Colonic mucosa (tissue), 4 donors: ENCODE measurements at regions of chr18 and their contacts with region 1.

Region 1: GRCh38 chr18:27017901-27018500 is 152.5 kb upstream of the AQP4 start:
- DNase-seq: no peak
- H3K4me3 ChIP-seq: no peak overlapping the region
- H3K27ac ChIP-seq: no peak overlapping the region
- H3K4me1 ChIP-seq: no peaks in the 10 kb centered on the region
- H3K27me3 ChIP-seq: no peaks in the 10 kb centered on the region
- CTCF ChIP-seq: peak; percentile 27

Region 2: DNA sequence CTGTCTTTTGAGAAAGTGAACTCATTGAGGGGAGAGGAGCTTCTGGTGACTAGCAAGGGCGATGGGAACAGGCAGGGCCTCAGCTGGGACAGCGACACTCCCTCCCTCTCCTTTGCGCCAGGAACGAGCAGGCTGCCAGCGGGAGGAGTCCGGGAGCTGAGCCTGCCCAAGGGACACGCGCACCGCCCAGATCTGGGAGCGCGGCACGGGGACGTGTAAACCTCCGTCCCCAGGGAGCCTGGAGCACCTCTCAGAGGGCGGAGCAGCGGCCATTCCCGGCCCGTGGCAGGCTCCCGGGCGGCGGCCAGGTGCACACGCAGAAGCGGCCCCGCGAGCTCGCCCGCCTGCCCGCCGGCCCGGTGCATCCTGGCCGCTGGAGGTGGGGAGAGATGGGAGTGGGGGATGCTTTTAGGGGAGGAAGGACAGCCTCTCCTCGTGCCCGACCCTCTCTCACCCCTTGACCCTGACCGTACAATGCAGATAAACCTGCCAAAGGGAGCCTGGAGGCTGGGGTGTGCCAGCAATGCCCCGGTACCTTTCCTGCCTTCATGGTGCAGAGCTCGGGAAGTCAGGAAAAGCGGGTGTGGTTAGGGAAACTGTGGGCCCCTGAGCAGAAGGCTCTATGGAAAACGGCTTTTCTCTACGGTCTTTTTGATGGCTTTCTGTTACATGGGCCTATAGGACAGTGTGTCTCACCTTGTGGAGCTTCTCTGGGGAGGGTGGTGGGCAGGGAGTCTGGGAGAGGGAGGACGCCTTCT is 154.7 kb before region 1 on chr18:
- intact Hi-C with region 1: no loop called
- DNase-seq: peak; percentile 68
- H3K4me3 ChIP-seq: peak overlapping the region; percentile 31
- H3K27ac ChIP-seq: no peak overlapping the region
- H3K4me1 ChIP-seq: no peaks in the 10 kb centered on the region
- H3K27me3 ChIP-seq: no peaks in the 10 kb centered on the region
- CTCF ChIP-seq: no peak

Region 3: DNA sequence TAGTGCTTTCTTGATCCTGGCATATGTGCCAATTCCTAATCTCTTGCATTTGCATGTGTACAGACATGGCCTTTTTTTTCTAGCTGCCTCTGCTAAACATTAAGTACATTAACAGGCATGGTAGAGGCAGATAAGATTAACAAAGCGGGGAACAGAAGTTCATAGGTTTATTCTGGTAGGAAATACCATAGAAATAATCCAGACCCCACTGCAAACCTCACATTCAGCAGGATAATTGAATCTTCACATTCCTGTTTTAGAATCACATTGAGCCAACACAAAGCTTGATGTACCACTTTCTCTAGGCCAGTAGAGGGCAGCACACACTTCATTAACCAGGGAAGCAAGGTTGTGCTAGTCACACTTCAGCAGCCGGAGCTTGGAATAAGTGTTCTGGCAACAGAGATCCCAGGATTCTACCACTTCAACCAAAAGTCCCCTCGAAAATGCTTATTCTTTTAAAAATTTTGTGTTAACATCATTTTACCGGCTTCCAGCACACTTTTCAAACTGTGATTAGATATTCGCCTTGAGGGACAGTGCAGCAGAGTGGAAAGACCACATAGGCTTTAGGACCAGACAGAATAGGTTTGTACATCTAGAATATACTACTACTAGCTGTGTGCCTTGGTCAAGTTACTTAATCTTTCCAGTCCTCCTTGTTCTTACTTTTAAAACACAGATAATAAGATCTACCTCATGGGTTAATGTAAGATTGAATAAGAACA is 587.3 kb after region 1 on chr18:
- intact Hi-C with region 1: loop called (anchors 5 kb)
- DNase-seq: peak; percentile 59
- H3K4me3 ChIP-seq: no peak overlapping the region
- H3K27ac ChIP-seq: no peak overlapping the region
- H3K4me1 ChIP-seq: no peaks in the 10 kb centered on the region
- H3K27me3 ChIP-seq: no peaks in the 10 kb centered on the region
- CTCF ChIP-seq: peak; percentile 74